Cardiac septum (tissue), 1 donor: ENCODE measurements at regions of chr2 and their contacts with region 1.

Region 1: GRCh38 chr2:26033818-26034636 is at the start of gene RAB10:
- DNase-seq: peak; percentile 99
- total RNA-seq, gene RAB10: 79.4 TPM

Region 2: DNA sequence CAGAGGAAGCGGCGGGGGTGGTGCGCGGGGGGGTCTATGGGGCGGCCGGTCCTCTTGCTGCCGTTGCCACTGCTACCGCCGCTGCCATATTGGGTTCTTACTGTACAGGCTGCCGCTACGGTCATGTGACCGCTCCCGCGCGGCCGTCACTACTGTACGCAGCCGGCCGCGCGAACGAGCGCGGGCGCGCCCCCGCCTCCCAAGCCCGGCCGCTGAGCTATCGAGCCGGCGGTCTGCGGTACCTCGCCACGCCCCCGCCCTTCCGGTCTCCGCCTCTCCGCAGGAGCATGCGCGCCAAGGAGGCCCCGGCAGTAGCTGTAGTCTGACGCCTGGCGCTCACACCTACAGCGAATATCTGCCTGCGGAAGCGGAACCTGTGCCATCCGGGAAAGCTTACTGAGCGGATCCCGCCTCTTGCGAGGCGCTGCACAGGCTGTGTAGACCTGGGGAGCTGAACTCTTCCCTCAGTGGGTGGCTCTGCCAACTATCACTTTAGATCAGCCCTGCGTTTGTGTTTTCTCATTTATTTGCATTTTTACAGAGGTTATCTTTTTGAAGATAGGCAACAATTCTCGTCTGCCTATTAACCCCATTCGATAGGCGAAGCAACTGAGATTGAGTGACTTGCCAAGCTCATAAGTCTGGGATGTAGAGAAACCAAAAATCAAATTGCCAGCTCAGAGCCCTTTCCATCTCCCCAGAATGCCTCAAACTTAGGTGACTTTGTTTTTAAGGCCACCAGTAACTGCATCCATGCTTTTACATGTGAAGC is 155.5 kb before region 1 on chr2 and contains the start of gene ASXL2:
- intact Hi-C with region 1: loop called (anchors 2 kb)
- DNase-seq: peak; percentile 99
- total RNA-seq, gene ASXL2: 24.1 TPM

Region 3: DNA sequence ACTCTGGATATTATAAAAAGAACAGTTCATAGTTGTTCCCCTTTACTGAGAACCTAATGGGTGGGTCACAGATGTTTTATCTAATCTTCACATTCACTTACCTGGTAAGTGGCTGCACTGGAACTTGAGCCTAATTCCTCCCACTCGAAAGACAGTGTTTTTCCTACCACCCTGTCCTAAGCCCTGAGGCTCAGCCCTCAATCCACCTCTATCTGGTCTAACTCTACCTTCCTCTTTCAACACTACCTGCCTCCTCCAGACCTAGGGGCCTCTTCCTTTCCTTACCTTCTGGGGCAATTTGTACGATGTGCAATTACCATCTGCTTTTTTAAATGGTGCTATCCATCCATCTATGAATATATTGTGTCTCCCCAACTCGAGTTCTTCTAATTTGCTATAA is 42.1 kb before region 1 on chr2:
- intact Hi-C with region 1: no loop called
- DNase-seq: no peak

Region 4: DNA sequence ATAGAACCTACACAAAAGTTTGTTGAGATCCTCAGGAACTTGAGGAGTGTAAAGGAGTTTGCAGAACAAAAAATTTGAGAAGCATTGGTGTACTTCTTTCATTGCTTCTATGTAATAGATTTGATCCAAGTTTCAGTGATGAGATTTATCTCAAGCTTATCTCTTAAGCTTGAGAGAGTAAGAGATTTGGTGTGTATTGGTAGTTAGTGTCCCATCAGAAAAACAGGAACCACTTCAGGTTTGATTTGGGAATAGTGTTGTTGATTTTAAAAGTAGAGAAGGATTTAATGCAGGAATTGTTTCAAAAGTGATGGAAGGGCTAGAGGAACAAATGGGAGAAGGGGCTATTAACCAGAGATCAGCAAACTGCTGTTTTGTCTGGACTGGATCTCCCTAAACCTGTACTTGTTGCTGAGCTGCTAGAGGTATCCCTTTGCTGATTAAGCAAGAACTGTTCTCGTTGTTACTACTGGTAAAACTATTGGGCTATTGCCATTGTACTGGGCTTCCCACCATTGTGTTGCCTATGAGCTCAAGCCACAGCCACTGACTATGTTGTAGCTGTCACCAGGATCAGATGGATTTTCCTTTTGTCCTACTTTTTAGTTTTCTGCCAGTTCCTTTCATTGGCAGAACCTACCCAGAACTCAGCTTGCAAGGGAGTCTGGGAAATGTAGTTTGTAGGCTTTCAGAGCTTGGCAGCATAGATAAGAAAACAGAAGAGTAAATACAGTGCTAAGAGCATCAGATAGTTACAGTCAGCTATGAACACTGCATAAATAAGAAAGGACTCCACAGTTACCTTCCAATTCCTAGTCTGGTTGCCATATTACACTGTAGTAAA is 39.1 kb after region 1 on chr2:
- intact Hi-C with region 1: loop called (anchors 5 kb)
- DNase-seq: no peak